CD8-positive, alpha-beta T cell (primary cell): ENCODE measurements at regions of chr1 and their contacts with region 1.

Region 1: GRCh38 chr1:169694304-169695075 is 16.9 kb downstream of the SELL start:
- DNase-seq: peak in 7 of 9 experiments; percentile 19 to 88 (median 58)
- ATAC-seq: peak; percentile 59
- H3K4me3 ChIP-seq: no peak overlapping the region
- H3K4me3 Mint-ChIP-seq: peak overlapping the region; percentile 60
- H3K27ac ChIP-seq: peak overlapping the region; percentile 50 to 74
- H3K27ac Mint-ChIP-seq: no peak overlapping the region
- H3K4me1 ChIP-seq: peaks cover 96% of the 10 kb centered on the region
- H3K4me1 Mint-ChIP-seq: peaks cover 71% of the 10 kb centered on the region
- H3K27me3 ChIP-seq: no peaks in the 10 kb centered on the region
- H3K27me3 Mint-ChIP-seq: no peaks in the 10 kb centered on the region
- CTCF ChIP-seq: peak; percentile 50

Region 2: GRCh38 chr1:168509875-168510791 is 1184.4 kb before region 1 on chr1:
- CTCF ChIA-PET with region 1: no interaction called
- POLR2A ChIA-PET with region 1: no interaction called
- intact Hi-C with region 1: loop called in 1 of 2 experiments (anchors 10 kb)
- DNase-seq: peak in 5 of 9 experiments; percentile 18 to 88 (median 63)
- ATAC-seq: peak; percentile 57
- H3K4me3 ChIP-seq: no peak overlapping the region
- H3K4me3 Mint-ChIP-seq: peak overlapping the region; percentile 4
- H3K27ac ChIP-seq: peak overlapping the region in 1 of 2 experiments; percentile 65
- H3K27ac Mint-ChIP-seq: peak overlapping the region; percentile 84
- H3K4me1 ChIP-seq: peaks cover 56% of the 10 kb centered on the region
- H3K4me1 Mint-ChIP-seq: peaks cover 72% of the 10 kb centered on the region
- H3K27me3 ChIP-seq: no peaks in the 10 kb centered on the region
- H3K27me3 Mint-ChIP-seq: no peaks in the 10 kb centered on the region
- CTCF ChIP-seq: no peak

Region 3: DNA sequence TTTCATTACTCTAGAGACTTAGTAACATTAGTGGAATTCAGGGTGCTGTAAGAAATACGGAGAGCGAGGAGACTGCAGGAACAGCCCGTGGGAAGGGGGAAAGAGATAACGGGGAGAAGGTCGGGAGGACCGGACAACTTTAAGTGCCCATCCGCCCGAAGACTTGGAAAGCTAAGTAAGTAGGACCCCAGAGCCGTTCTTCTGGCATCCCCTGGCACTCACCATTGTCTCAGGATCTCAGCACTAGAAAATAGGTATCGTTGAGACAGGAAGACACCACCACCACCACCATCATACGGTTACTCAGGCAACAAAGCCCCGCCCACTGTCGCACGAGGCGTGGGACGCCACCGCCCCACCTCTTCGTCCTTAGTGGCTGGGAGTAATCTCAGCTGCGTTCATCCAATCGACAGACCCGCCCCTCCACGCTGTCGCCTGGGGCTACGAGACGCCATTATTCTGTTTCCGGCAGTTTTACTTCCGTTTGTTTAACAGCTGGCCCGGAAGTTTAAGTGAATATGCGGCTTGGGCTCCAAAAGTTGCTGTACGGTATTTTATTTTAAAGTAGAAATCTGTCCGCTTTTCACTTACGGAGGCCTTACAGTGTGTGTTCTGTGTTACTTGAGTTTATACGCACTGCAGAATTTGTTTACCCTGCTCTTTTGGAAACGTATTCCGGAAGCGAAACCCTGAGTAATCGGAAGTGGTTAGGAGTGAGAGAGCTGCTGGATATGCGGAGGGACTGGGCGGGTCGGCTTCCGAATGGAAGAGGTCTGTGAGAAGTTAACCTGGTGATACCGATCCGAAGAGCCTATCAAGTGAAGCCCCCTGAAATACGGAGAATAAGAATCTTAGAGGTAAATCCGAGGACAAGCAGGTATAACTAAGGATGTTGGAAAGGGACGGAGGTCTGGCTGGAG is 326.7 kb before region 1 on chr1 and contains the starts of genes BLZF1 and NME7:
- CTCF ChIA-PET with region 1: no interaction called
- POLR2A ChIA-PET with region 1: no interaction called
- intact Hi-C with region 1: loop called in 1 of 2 experiments (anchors 5 kb)
- DNase-seq: peak; percentile 96 to 99 (median 98)
- ATAC-seq: peak; percentile 93
- H3K4me3 ChIP-seq: peak within 1 kb of the TSS; percentile 84 to 94
- H3K4me3 Mint-ChIP-seq: peak within 1 kb of the TSS; percentile 51
- H3K27ac ChIP-seq: peak within 1 kb of the TSS; percentile 88 to 97
- H3K27ac Mint-ChIP-seq: peak within 1 kb of the TSS; percentile 32
- H3K4me1 ChIP-seq: peaks cover 23% of the 10 kb centered on the region
- H3K4me1 Mint-ChIP-seq: peaks cover 49% of the 10 kb centered on the region
- H3K27me3 ChIP-seq: no peaks in the 10 kb centered on the region
- H3K27me3 Mint-ChIP-seq: no peaks in the 10 kb centered on the region
- CTCF ChIP-seq: no peak
- total RNA-seq, gene BLZF1: 11.1 to 13.6 TPM
- total RNA-seq, gene NME7: 5.3 to 7.7 TPM

Region 4: GRCh38 chr1:169586395-169587255 is 107.9 kb before region 1 on chr1 and contains the start of gene F5:
- CTCF ChIA-PET with region 1: interaction called, 10 read pairs
- POLR2A ChIA-PET with region 1: interaction called, 7 read pairs
- intact Hi-C with region 1: no loop called
- DNase-seq: peak; percentile 53 to 83 (median 74)
- ATAC-seq: peak; percentile 100
- H3K4me3 ChIP-seq: peak within 1 kb of the TSS; percentile 1 to 32
- H3K4me3 Mint-ChIP-seq: peak within 1 kb of the TSS; percentile 76
- H3K27ac ChIP-seq: no peak within 1 kb of the TSS
- H3K27ac Mint-ChIP-seq: no peak within 1 kb of the TSS
- H3K4me1 ChIP-seq: peaks cover 21% of the 10 kb centered on the region
- H3K4me1 Mint-ChIP-seq: peaks cover 17% of the 10 kb centered on the region
- H3K27me3 ChIP-seq: no peaks in the 10 kb centered on the region
- H3K27me3 Mint-ChIP-seq: peaks cover 12% of the 10 kb centered on the region
- CTCF ChIP-seq: peak; percentile 70
- total RNA-seq, gene F5: 0.28 to 0.30 TPM

Region 5: GRCh38 chr1:169615803-169616202 is 78.7 kb before region 1 on chr1:
- CTCF ChIA-PET with region 1: interaction called, 15 read pairs
- POLR2A ChIA-PET with region 1: interaction called, 6 read pairs
- intact Hi-C with region 1: no loop called
- DNase-seq: no peak
- ATAC-seq: no peak
- H3K4me3 ChIP-seq: no peak overlapping the region
- H3K4me3 Mint-ChIP-seq: no peak overlapping the region
- H3K27ac ChIP-seq: no peak overlapping the region
- H3K27ac Mint-ChIP-seq: no peak overlapping the region
- H3K4me1 ChIP-seq: no peaks in the 10 kb centered on the region
- H3K4me1 Mint-ChIP-seq: peaks cover 9% of the 10 kb centered on the region
- H3K27me3 ChIP-seq: no peaks in the 10 kb centered on the region
- H3K27me3 Mint-ChIP-seq: no peaks in the 10 kb centered on the region
- CTCF ChIP-seq: no peak

Region 6: DNA sequence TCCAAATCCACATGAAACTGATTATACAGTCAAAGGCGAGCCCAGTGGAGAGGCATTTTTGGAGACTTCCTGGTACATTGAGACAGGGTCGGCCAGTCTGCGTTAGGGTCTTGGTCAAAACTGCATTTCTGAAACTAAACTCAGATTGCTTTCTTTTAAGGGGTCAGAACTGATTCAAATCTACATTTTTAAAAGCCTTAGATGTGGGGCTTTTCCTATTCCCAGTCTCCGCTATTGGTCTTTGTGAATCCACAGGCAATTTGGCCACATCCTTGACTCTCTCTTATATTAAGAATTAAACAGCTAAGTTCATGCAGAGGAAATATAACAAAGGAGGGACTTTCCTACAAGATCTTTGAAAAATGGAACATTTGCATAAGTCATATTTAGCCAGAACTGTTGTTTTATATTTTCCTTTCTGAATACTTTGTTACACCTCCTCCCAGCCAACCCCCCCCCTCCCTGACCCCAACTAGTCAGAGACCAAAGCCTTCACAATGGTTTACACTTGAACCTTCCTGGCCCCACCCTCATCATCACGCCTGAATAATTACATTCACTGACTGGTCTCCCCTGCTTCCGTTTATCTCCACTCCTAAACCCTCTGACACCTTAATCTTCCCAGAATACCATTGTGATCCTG is 14.0 kb before region 1 on chr1:
- CTCF ChIA-PET with region 1: interaction called, 5 read pairs
- POLR2A ChIA-PET with region 1: interaction called, 77 read pairs
- intact Hi-C with region 1: loop called in 1 of 2 experiments (anchors 1 kb)
- DNase-seq: peak in 2 of 9 experiments; percentile 35 to 41
- ATAC-seq: peak; percentile 56
- H3K4me3 ChIP-seq: no peak overlapping the region
- H3K4me3 Mint-ChIP-seq: peak overlapping the region; percentile 45
- H3K27ac ChIP-seq: no peak overlapping the region
- H3K27ac Mint-ChIP-seq: peak overlapping the region; percentile 86
- H3K4me1 ChIP-seq: peaks cover 72% of the 10 kb centered on the region
- H3K4me1 Mint-ChIP-seq: peaks cover 54% of the 10 kb centered on the region
- H3K27me3 ChIP-seq: no peaks in the 10 kb centered on the region
- H3K27me3 Mint-ChIP-seq: no peaks in the 10 kb centered on the region
- CTCF ChIP-seq: no peak